Activated T-helper 1 cell treated with anti-CD3 and anti-CD28 coated beads, Interleukin-12 subunit alpha, Interleukin-12 subunit beta, Interleukin-2, Interleukin-4 antibody, amounts not matched to agents 30 ng/mL and 10 ng/mL and 1 ng/mL, durations not matched to agents 14 hours and 24 hours and 36 hours (primary cell): ENCODE measurements at regions of chr19 and their contacts with region 1.

Region 1: DNA sequence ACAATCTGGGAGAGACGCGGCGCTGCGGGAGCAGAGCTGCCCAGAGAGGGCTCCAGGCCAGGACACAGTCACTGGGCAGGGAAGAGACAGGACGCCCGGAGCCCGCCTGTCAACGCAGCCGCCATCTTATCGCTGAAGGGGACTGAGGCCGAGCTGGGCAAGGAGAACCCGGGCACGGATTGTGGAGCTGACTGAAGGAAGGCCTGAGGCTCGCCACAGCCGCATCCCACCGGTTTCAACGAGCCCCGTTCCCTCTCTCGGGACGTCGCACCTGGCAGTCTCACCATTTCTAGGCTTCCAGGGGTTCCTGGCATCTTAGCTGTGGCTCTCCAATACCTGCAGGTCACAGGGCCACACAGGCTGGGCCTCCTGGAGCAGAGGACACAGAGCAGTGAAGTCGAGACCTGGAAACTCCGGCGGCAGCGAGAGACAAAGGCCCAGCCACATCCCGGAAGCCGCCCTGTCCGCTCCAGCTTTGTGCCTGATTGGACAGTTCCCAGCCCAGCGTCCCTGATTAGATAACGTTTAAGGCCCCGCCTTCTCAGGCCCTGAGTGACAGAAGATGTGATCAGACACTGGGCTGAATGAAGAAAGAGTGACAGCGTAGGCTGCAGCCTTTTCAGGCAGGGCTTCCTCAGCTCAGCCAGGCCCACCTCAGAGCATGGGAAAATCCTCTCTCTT is at the start of gene ZNF91:
- DNase-seq: peak; percentile 88
- H3K4me3 Mint-ChIP-seq: peak within 1 kb of the TSS; percentile 97
- H3K27ac Mint-ChIP-seq: peak within 1 kb of the TSS; percentile 96
- H3K4me1 Mint-ChIP-seq: peaks cover 9% of the 10 kb centered on the region
- H3K27me3 Mint-ChIP-seq: no peaks in the 10 kb centered on the region
- total RNA-seq, gene ZNF91: 20.5 and 22.4 TPM in 2 replicates

Region 2: DNA sequence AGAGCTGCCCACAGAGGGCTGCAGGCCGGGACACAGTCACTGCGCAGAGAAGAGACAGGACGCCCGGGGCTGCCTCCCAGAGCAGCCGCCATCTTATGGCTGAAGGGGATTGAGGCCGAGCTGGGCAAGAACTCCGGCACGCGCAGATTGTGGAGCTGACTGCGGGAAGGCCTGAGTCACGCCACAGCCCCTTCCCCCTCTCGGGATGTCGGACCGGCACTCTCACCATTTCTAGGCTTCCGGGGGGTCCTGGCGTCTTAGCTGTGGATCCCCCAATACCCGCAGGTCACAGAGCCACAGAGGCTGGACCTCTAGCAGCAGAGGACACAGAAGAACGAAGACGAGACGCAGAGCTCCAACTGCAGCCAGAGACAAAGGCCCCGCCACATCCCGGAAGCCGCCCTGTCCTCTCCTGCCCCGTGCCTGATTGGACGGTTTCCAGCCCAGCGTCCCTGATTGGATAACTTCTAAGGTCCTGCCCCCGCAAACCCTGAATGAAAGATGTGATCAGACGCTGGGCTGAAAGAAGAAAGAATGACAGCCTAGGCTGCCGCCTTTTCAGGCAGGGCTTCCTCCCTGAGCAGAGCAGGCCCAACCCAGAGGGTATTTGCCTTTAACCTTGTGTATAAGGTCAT is 1559.3 kb before region 1 on chr19 and contains the start of gene ZNF43:
- intact Hi-C with region 1: loop called (anchors 10 kb)
- DNase-seq: peak; percentile 87
- H3K4me3 Mint-ChIP-seq: peak within 1 kb of the TSS; percentile 98
- H3K27ac Mint-ChIP-seq: peak within 1 kb of the TSS; percentile 98
- H3K4me1 Mint-ChIP-seq: peaks cover 2% of the 10 kb centered on the region
- H3K27me3 Mint-ChIP-seq: peaks cover 2% of the 10 kb centered on the region
- total RNA-seq, gene ZNF43: 29.9 and 30.5 TPM in 2 replicates

Region 3: GRCh38 chr19:23273590-23274413 is 121.4 kb before region 1 on chr19:
- intact Hi-C with region 1: loop called (anchors 1 kb)
- DNase-seq: peak; percentile 86
- H3K4me3 Mint-ChIP-seq: peak overlapping the region; percentile 96
- H3K27ac Mint-ChIP-seq: peak overlapping the region; percentile 90
- H3K4me1 Mint-ChIP-seq: peaks cover 23% of the 10 kb centered on the region
- H3K27me3 Mint-ChIP-seq: no peaks in the 10 kb centered on the region

Region 4: GRCh38 chr19:23758187-23759074 is 363.2 kb after region 1 on chr19 and contains the start of gene ZNF681:
- intact Hi-C with region 1: loop called (anchors 2 kb)
- DNase-seq: peak; percentile 76
- H3K4me3 Mint-ChIP-seq: peak within 1 kb of the TSS; percentile 90
- H3K27ac Mint-ChIP-seq: peak within 1 kb of the TSS; percentile 83
- H3K4me1 Mint-ChIP-seq: peaks cover 13% of the 10 kb centered on the region
- H3K27me3 Mint-ChIP-seq: no peaks in the 10 kb centered on the region
- total RNA-seq, gene ZNF681: 3.0 and 3.3 TPM in 2 replicates

Region 5: GRCh38 chr19:24033301-24033962 is 638.3 kb after region 1 on chr19:
- intact Hi-C with region 1: loop called (anchors 2 kb)
- DNase-seq: peak; percentile 76
- H3K4me3 Mint-ChIP-seq: peak overlapping the region; percentile 100
- H3K27ac Mint-ChIP-seq: peak overlapping the region; percentile 98
- H3K4me1 Mint-ChIP-seq: peaks cover 26% of the 10 kb centered on the region
- H3K27me3 Mint-ChIP-seq: no peaks in the 10 kb centered on the region